ENCODE measurements at regions of chr2 and their contacts with region 1.

Region 1: GRCh38 chr2:15560988-15561573 is at the start of gene NBAS:
- DNase-seq: peak; percentile 68
- H3K4me3 Mint-ChIP-seq: peak within 1 kb of the TSS; percentile 97
- H3K27ac Mint-ChIP-seq: peak within 1 kb of the TSS; percentile 86
- H3K4me1 Mint-ChIP-seq: peaks cover 41% of the 10 kb centered on the region
- H3K27me3 Mint-ChIP-seq: peaks cover 3% of the 10 kb centered on the region
- total RNA-seq, gene NBAS: 33.3 and 33.6 TPM in 2 replicates

Region 2: DNA sequence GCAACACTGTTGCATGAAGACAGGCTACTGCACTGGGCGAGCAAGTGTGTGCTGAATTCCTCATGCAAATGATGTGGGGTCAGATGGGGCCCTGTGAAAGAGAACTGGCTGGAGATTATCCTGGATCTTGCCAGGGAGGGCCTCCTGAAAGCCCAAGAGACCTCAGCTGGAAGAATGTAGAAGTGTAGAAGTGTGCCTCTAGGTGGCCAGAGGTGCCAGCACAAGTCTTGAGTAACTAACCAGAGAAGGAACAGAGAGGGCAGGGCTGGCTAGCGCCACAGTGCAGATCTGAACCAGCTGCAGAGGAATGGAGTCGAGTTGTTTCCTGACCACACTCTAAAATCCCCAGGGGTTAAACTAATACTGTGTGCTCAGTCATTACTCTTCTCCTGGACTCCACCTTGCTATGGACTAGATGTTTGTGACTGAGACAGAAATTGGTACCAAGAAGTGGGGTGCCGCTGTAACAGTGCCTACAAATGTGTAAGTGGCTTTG is 529.3 kb before region 1 on chr2:
- intact Hi-C with region 1: loop called (anchors 10 kb)
- DNase-seq: no peak
- H3K4me3 Mint-ChIP-seq: no peak overlapping the region
- H3K27ac Mint-ChIP-seq: no peak overlapping the region
- H3K4me1 Mint-ChIP-seq: no peaks in the 10 kb centered on the region
- H3K27me3 Mint-ChIP-seq: no peaks in the 10 kb centered on the region

Region 3: GRCh38 chr2:15142069-15142873 is 418.8 kb before region 1 on chr2:
- intact Hi-C with region 1: loop called (anchors 1 kb)
- DNase-seq: peak; percentile 72
- H3K4me3 Mint-ChIP-seq: peak overlapping the region; percentile 53
- H3K27ac Mint-ChIP-seq: peak overlapping the region; percentile 92
- H3K4me1 Mint-ChIP-seq: peaks cover 25% of the 10 kb centered on the region
- H3K27me3 Mint-ChIP-seq: no peaks in the 10 kb centered on the region

Region 4: GRCh38 chr2:15302154-15302553 is 258.9 kb before region 1 on chr2:
- intact Hi-C with region 1: loop called (anchors 10 kb)
- DNase-seq: no peak
- H3K4me3 Mint-ChIP-seq: no peak overlapping the region
- H3K27ac Mint-ChIP-seq: no peak overlapping the region
- H3K4me1 Mint-ChIP-seq: peaks cover 57% of the 10 kb centered on the region
- H3K27me3 Mint-ChIP-seq: no peaks in the 10 kb centered on the region

Region 5: DNA sequence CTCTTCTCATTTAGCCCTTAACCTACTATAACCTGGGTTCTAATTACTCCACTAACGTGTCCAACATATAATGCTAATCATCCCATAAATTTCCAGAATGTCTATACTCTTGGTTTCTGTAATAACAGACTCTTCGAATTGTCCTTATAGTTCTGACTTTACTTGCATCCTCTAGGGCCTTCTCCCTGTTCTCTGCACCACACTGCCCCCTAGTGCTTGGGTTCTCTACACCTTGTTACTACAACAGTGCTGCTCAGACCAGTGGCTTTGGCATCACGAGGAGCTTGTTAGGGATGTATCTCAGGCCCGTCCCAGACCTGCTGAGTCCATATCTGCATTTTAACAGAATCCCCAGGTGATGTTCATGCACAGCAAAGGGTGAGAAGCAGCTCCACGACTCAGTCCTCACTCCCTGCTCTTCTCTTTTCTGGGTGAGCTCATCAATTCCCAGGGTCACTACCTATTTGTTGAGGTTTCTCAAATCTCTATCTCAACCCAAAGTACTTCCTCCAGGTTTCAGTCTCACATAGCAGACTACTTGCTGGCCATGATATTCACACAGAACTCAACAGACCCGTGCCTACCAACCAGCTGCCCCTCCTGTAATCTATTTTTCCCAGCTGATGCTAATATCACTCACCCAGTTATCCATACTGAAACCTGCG is 16.1 kb after region 1 on chr2:
- intact Hi-C with region 1: loop called (anchors 1 kb)
- DNase-seq: peak; percentile 74
- H3K4me3 Mint-ChIP-seq: no peak overlapping the region
- H3K27ac Mint-ChIP-seq: no peak overlapping the region
- H3K4me1 Mint-ChIP-seq: no peaks in the 10 kb centered on the region
- H3K27me3 Mint-ChIP-seq: no peaks in the 10 kb centered on the region

Region 6: DNA sequence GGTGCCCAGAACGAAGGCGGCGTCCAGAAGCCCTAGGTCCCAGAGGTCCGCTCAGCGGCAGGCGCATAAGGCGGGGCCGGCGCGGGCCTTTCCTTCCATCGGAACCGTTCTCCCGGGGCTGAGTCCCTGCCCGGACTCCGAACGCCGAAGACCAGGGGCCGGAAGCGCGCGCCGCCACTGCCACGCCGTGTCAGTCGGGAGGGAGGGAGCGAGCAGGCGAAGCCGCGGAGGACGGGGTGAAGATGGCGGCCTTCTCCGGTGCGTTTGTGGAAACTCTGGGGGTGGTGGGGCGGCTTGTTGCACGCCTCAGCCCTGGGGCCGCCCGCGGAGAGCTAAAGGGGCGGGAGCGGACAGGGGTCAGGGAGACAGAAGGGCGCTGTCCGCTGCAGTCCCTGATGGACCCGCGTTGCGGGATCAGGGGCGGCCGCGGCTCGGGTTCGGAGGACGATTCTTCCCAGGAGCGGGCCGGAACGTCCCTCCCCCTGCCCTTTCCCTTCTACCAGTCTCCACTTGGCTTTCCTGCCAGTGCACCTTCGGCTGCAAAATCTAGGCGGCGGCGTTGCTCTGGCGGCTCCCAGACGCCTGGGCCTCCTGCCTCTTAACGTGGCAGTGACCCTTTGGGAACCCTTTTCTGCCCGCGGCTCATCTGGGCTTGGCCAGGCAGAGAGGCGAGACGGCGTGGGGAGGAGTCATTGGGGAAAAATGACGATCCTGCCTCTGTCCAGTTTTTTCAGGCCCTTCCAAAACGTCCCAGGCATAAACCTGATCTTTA is 30.8 kb after region 1 on chr2 and contains the start of gene DDX1:
- intact Hi-C with region 1: loop called (anchors 1 kb)
- DNase-seq: peak; percentile 81
- H3K4me3 Mint-ChIP-seq: peak within 1 kb of the TSS; percentile 91
- H3K27ac Mint-ChIP-seq: peak within 1 kb of the TSS; percentile 91
- H3K4me1 Mint-ChIP-seq: peaks cover 30% of the 10 kb centered on the region
- H3K27me3 Mint-ChIP-seq: no peaks in the 10 kb centered on the region
- total RNA-seq, gene DDX1: 104 and 111 TPM in 2 replicates

Measured in activated T-helper 1 cell treated with anti-CD3 and anti-CD28 coated beads, Interleukin-12 subunit alpha, Interleukin-12 subunit beta, Interleukin-2, Interleukin-4 antibody, amounts not matched to agents 30 ng/mL and 10 ng/mL and 1 ng/mL, durations not matched to agents 14 hours and 24 hours and 36 hours (primary cell).